CD14-positive monocyte (primary cell): ENCODE measurements at regions of chr7 and their contacts with region 1.

Region 1: GRCh38 chr7:131007394-131008330 is 273.7 kb upstream of the KLF14 start:
- DNase-seq: peak; percentile 62 to 74 (median 73)
- H3K4me3 ChIP-seq: peak overlapping the region in 1 of 3 experiments; percentile 23
- H3K4me3 Mint-ChIP-seq: peak overlapping the region; percentile 45 to 86
- H3K27ac ChIP-seq: peak overlapping the region; percentile 29 to 35
- H3K27ac Mint-ChIP-seq: peak overlapping the region; percentile 75 to 88 (median 82)
- H3K4me1 ChIP-seq: peaks cover 49 to 53% of the 10 kb centered on the region in 2 donors
- H3K4me1 Mint-ChIP-seq: peaks cover 61% of the 10 kb centered on the region
- H3K27me3 ChIP-seq: no peaks in the 10 kb centered on the region
- H3K27me3 Mint-ChIP-seq: peaks cover 0 to 4% (median 0%) of the 10 kb centered on the region in 3 donors
- CTCF ChIP-seq: peak; percentile 50

Region 2: DNA sequence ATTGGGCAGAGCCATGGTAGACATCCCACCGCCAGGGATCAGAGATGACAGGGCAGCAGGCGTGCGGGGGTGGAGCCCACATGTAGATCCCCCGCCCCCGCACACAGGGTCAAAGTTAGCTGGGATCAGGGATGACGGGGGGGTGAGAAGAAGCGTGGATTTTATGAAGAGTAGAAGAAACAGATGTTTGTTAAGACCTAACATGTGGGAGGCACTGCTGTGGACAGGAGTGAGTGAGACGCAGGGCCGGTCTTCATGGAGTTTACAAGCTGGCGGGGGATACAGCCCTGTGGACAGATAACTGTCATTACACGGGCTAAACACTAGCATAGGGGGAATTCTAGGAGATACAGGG is 119.7 kb before region 1 on chr7:
- intact Hi-C with region 1: no loop called
- DNase-seq: no peak
- H3K4me3 ChIP-seq: no peak overlapping the region
- H3K4me3 Mint-ChIP-seq: no peak overlapping the region
- H3K27ac ChIP-seq: no peak overlapping the region
- H3K27ac Mint-ChIP-seq: peak overlapping the region in 1 of 7 donors; percentile 17
- H3K4me1 ChIP-seq: no peaks in the 10 kb centered on the region
- H3K4me1 Mint-ChIP-seq: no peaks in the 10 kb centered on the region
- H3K27me3 ChIP-seq: no peaks in the 10 kb centered on the region
- H3K27me3 Mint-ChIP-seq: no peaks in the 10 kb centered on the region
- CTCF ChIP-seq: no peak

Region 3: DNA sequence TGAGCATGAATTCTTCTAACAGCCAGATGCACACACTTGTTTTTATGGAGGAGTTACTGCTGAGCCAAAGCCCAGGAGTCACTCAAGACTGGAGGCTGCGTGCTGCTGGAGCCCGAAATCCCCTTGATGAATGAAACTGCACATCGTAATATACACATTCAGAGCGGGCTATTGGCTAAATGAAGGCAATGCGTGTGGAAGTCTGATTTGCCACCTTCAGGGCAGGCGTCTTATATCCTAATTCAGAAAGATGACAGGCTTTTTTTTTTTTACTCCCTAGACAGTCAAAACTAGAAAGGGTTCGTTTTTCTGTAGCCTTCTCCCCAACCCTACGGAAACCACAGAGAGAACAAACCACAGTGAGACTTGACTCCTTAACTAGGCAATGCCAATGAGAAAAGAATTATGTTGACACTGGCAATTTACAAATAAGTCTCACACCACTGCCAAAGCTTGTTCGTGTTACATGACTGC is 46.5 kb before region 1 on chr7:
- intact Hi-C with region 1: loop called (anchors 5 to 10 kb)
- DNase-seq: peak; percentile 48 to 92 (median 85)
- H3K4me3 ChIP-seq: peak overlapping the region in 2 of 3 experiments; percentile 40 to 46
- H3K4me3 Mint-ChIP-seq: peak overlapping the region; percentile 79 to 80
- H3K27ac ChIP-seq: peak overlapping the region; percentile 72 to 95
- H3K27ac Mint-ChIP-seq: peak overlapping the region; percentile 95 to 99 (median 97)
- H3K4me1 ChIP-seq: peaks cover 48 to 74% of the 10 kb centered on the region in 2 donors
- H3K4me1 Mint-ChIP-seq: peaks cover 71% of the 10 kb centered on the region
- H3K27me3 ChIP-seq: no peaks in the 10 kb centered on the region
- H3K27me3 Mint-ChIP-seq: peaks cover 0 to 1% (median 0%) of the 10 kb centered on the region in 3 donors
- CTCF ChIP-seq: no peak

Region 4: DNA sequence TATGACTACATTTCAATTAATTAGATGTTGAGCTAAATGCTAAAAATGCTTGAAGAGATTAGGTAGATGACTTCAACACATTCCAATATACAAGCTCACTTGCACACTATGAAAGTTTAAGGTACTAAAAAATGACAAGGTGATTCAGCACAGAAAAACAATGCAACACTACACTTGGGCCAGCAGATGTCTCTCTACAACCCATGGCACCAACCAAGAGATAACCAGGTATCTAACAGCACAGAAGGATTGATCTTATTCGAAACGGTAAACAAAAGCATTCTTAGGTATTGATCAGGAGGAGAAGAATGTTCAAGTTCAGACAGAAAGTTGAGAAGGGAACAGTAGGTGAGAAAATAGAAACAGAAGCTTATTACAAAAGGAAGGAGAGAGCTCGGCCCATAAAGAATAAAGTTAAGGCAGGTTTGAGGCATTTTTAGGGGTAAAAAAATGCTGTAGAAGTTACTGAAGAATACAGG is 25.5 kb before region 1 on chr7:
- intact Hi-C with region 1: no loop called
- DNase-seq: peak; percentile 18 to 38 (median 26)
- H3K4me3 ChIP-seq: no peak overlapping the region
- H3K4me3 Mint-ChIP-seq: no peak overlapping the region
- H3K27ac ChIP-seq: no peak overlapping the region
- H3K27ac Mint-ChIP-seq: no peak overlapping the region
- H3K4me1 ChIP-seq: no peaks in the 10 kb centered on the region
- H3K4me1 Mint-ChIP-seq: no peaks in the 10 kb centered on the region
- H3K27me3 ChIP-seq: no peaks in the 10 kb centered on the region
- H3K27me3 Mint-ChIP-seq: no peaks in the 10 kb centered on the region
- CTCF ChIP-seq: peak; percentile 73

Region 5: GRCh38 chr7:131027287-131027773 is 19.7 kb after region 1 on chr7:
- intact Hi-C with region 1: loop called in 1 of 2 experiments (anchors 2 kb)
- DNase-seq: peak in 2 of 3 donors; percentile 36
- H3K4me3 ChIP-seq: peak overlapping the region in 1 of 3 experiments; percentile 12
- H3K4me3 Mint-ChIP-seq: peak overlapping the region; percentile 16 to 18
- H3K27ac ChIP-seq: peak overlapping the region in 1 of 2 donors; percentile 60
- H3K27ac Mint-ChIP-seq: peak overlapping the region; percentile 60 to 89 (median 83)
- H3K4me1 ChIP-seq: peaks cover 16 to 17% of the 10 kb centered on the region in 2 donors
- H3K4me1 Mint-ChIP-seq: peaks cover 32% of the 10 kb centered on the region
- H3K27me3 ChIP-seq: no peaks in the 10 kb centered on the region
- H3K27me3 Mint-ChIP-seq: no peaks in the 10 kb centered on the region
- CTCF ChIP-seq: no peak